ENCODE measurements at regions of chr7 and their contacts with region 1.

Region 1: GRCh38 chr7:49707891-49708290 is 65.5 kb upstream of the VWC2 start:
- DNase-seq: no peak
- ATAC-seq: no peak
- H3K4me3 ChIP-seq: no peak overlapping the region
- H3K27ac ChIP-seq: no peak overlapping the region
- H3K4me1 ChIP-seq: peaks cover 0 to 6% (median 0%) of the 10 kb centered on the region in 12 donors
- H3K27me3 ChIP-seq: no peaks in the 10 kb centered on the region
- CTCF ChIP-seq: no peak
- POLR2A ChIP-seq: no peak

Region 2: DNA sequence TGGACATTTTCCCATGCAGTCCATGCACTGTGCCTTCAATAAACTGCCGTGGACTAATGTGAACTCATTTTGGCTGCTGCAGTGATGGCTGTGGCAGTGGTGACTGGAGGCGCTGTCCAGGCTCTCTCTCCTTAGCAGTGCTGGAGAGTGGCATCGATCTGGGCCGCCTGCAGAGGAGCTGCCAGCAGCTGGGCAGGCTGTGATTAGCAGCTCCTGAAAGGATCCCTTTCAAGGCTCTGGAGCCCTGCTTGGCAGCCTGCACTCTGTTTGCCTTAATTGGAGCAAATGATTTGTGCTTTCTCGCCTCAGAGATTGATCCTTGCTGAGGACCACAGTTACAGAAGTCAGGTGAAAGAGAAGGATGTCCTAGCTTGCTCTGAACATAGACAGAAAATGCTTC is 64.6 kb before region 1 on chr7:
- intact Hi-C with region 1: loop called in 1 of 10 experiments (anchors 5 kb)
- DNase-seq: peak; percentile 32 to 68 (median 59)
- ATAC-seq: peak; percentile 87 to 98 (median 94)
- H3K4me3 ChIP-seq: no peak overlapping the region
- H3K27ac ChIP-seq: no peak overlapping the region
- H3K4me1 ChIP-seq: peaks cover 0 to 17% (median 0%) of the 10 kb centered on the region in 12 donors
- H3K27me3 ChIP-seq: no peaks in the 10 kb centered on the region
- CTCF ChIP-seq: no peak
- POLR2A ChIP-seq: no peak

Region 3: GRCh38 chr7:49986191-49986590 is 278.3 kb after region 1 on chr7:
- intact Hi-C with region 1: no loop called
- DNase-seq: no peak
- ATAC-seq: no peak
- H3K4me3 ChIP-seq: no peak overlapping the region
- H3K27ac ChIP-seq: no peak overlapping the region
- H3K4me1 ChIP-seq: no peaks in the 10 kb centered on the region
- H3K27me3 ChIP-seq: no peaks in the 10 kb centered on the region
- CTCF ChIP-seq: no peak
- POLR2A ChIP-seq: no peak

Region 4: DNA sequence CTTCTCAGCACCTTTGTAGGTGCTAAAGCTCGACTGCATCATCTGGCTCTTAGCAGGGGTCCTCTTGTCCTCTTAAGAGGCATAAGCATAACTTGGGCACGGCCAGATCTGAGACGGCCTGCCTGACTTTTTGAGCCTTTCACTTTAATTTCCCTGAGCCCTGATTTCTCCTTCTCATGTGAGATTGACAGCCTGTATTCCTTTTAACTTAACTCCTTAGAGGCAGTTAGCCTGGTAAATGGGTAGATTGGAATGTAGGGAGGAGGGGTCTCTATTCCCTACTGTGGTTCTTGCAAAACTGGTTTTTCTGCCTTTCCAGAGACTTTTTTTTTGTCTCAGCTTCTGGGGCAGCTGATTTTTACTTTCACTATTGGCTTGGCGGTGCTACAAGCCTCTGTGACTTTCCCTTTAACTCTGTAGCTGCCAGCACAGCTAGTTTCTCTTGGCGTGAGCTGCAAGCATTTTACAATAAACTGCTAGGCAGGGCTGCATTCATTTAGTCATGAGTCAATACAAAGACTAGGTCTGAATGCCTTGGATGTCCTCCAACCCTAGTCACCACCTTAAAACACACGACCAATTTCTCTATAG is 361.2 kb after region 1 on chr7:
- intact Hi-C with region 1: no loop called
- DNase-seq: peak in 3 of 5 donors; percentile 13 to 27 (median 24)
- ATAC-seq: peak; percentile 34 to 82 (median 63)
- H3K4me3 ChIP-seq: peak overlapping the region; percentile 6 to 74 (median 60)
- H3K27ac ChIP-seq: peak overlapping the region in 10 of 12 donors; percentile 25 to 87 (median 46)
- H3K4me1 ChIP-seq: peaks cover 0 to 17% (median 12%) of the 10 kb centered on the region in 12 donors
- H3K27me3 ChIP-seq: no peaks in the 10 kb centered on the region
- CTCF ChIP-seq: no peak
- POLR2A ChIP-seq: no peak

Measured in heart left ventricle (tissue), 16 donors.